Gastrocnemius medialis (tissue), 4 donors: ENCODE measurements at regions of chr18 and their contacts with region 1.

Region 1: DNA sequence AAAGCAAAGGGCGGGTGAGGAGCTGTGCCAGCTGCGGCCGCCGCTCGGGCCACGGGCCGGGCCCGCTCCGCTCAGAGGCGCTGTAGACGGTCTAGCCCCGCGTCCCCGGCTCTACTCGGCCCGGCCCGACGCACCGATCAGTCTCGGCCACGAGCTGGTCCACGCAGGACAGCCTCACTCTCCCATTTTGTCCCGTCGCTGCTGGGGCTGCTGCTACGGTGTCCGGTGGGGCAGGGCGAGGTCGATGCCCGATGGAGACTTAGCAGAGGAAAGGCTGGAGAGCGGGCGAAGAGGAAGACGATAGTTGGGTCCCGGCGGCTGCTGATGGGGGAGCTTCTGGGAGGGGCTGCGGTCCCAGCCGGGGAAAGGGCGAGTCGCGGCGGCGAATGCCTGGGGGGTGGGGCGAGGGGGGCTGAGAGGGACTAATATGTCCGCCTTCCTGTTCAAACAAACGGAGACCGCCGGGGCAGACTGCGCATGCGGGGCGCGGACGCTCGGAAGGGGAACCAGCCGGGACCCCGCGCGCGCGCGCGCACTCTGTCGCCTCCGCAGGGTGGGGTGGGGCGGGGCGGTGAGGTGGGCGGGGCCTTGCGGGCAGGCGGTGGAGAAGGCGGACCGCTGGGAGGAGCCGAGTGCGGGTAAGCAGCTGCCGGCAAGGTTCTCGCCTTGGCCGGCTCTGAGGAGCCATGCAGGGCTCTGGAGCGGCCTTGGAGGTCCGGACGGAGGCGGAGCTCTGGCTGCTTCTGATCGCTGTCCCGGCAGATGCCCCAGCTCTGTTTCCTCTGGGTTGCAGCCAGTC is at the start of gene ROCK1:
- DNase-seq: peak; percentile 96 to 98
- ATAC-seq: peak; percentile 89 to 91
- H3K4me3 ChIP-seq: peak within 1 kb of the TSS; percentile 81 to 100 (median 98)
- H3K27ac ChIP-seq: peak within 1 kb of the TSS; percentile 96 to 100 (median 99)
- H3K4me1 ChIP-seq: peaks cover 36 to 43% of the 10 kb centered on the region in 2 donors
- H3K27me3 ChIP-seq: no peaks in the 10 kb centered on the region
- CTCF ChIP-seq: no peak
- POLR2A ChIP-seq: peak; percentile 67 to 82
- total RNA-seq, gene ROCK1: 11.0 to 15.7 (median 12.7) TPM

Region 2: GRCh38 chr18:21004726-21005125 is 106.8 kb before region 1 on chr18:
- in situ Hi-C with region 1: loop called in 1 of 4 experiments (anchors 10 kb)
- intact Hi-C with region 1: loop called (anchors 5 kb)
- DNase-seq: peak in 1 of 2 donors; percentile 3
- ATAC-seq: peak; percentile 98 to 99
- H3K4me3 ChIP-seq: no peak overlapping the region
- H3K27ac ChIP-seq: peak overlapping the region; percentile 69 to 73 (median 70)
- H3K4me1 ChIP-seq: peaks cover 14 to 17% of the 10 kb centered on the region in 2 donors
- H3K27me3 ChIP-seq: no peaks in the 10 kb centered on the region
- CTCF ChIP-seq: no peak
- POLR2A ChIP-seq: no peak

Region 3: DNA sequence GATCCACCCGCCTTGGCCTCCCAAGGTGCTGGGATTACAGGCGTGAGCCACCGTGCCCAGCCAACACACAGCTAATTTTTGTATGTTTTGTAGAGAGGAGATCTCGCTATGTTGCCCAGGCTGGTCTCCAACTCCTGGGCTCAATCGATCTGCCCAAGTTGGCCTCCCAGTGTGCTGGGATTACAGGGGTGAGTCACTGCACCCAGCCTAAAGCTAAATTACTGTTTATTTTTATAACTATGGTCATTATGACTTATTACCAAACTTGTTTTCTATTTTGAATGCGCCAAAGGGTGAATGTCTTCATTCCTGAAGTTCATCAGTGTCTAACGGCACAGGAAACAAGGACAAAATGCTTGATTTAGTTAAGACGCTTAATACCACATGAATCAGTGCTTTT is 91.6 kb after region 1 on chr18:
- in situ Hi-C with region 1: no loop called
- intact Hi-C with region 1: no loop called
- DNase-seq: no peak
- ATAC-seq: no peak
- H3K4me3 ChIP-seq: no peak overlapping the region
- H3K27ac ChIP-seq: no peak overlapping the region
- H3K4me1 ChIP-seq: no peaks in the 10 kb centered on the region
- H3K27me3 ChIP-seq: no peaks in the 10 kb centered on the region
- CTCF ChIP-seq: no peak
- POLR2A ChIP-seq: no peak

Region 4: DNA sequence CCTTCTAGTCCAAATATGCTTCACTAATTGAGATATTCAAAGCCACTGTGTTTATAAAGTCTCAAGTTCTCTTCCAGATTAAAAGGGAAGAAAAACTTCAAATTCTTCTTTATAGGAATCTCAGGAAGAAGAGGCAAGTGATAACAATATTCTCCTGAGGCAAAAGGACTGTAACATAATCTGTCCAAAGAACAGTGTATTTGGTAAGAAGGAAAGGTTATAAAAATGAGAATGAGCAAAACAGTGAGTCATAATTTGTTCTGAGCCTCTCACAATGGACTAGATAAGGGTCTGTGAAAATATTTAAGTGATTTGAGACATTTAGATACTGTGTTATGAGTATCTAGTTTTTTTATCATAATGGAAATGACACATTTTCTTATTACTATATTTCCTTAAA is 544.9 kb after region 1 on chr18:
- in situ Hi-C with region 1: no loop called
- intact Hi-C with region 1: no loop called
- DNase-seq: no peak
- ATAC-seq: no peak
- H3K4me3 ChIP-seq: no peak overlapping the region
- H3K27ac ChIP-seq: no peak overlapping the region
- H3K4me1 ChIP-seq: no peaks in the 10 kb centered on the region
- H3K27me3 ChIP-seq: no peaks in the 10 kb centered on the region
- CTCF ChIP-seq: no peak
- POLR2A ChIP-seq: no peak

Region 5: DNA sequence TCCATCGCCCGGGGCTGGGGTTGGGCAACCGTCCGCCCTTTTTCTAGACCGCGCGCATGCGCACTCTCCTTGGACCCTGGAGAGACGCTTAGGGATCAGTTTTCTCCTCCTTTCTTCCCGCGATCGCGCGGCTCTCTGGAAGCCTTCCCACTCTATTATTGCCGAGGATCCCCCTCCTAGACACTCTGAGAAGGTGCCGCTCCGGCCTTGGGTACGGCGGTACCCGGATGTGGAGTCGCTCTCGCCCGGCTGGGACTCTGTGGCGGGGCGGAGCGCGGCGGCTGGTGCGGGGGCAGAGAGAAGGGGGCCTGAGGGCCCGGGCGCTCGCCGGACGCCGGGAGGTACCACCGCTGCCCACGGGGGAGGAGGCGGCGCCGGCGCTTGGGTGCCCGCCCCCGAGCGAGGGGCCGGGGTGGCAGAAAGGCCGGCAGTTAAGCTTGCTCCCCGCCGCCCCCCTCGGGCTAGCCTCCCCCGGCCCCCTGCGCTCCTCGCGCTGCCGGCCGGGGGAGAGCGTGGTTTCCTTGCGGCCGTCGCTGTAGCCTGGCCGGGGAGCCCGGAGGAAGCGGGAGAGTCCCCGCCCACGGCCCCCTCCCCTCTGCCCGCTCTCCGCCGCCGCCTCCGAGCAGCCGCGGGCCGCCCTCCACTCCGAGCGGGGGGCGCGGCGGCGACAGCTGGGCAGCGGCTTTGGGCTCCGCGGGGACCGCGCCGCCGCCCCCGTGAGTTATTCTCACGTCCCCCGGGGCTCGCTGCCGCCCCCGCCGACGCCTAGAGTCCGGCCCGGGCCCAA is 629.4 kb after region 1 on chr18 and contains the start of gene MIB1:
- in situ Hi-C with region 1: no loop called
- intact Hi-C with region 1: loop called (anchors 2 kb)
- DNase-seq: no peak
- ATAC-seq: peak; percentile 91 to 94
- H3K4me3 ChIP-seq: peak within 1 kb of the TSS; percentile 65 to 97 (median 81)
- H3K27ac ChIP-seq: peak within 1 kb of the TSS; percentile 92 to 99 (median 96)
- H3K4me1 ChIP-seq: peaks cover 30 to 37% of the 10 kb centered on the region in 2 donors
- H3K27me3 ChIP-seq: no peaks in the 10 kb centered on the region
- CTCF ChIP-seq: peak in 1 of 5 experiments; percentile 2
- POLR2A ChIP-seq: peak; percentile 84 to 88
- total RNA-seq, gene MIB1: 16.4 to 22.3 (median 21.6) TPM

Region 6: GRCh38 chr18:21831413-21831831 is 719.9 kb after region 1 on chr18:
- in situ Hi-C with region 1: no loop called
- intact Hi-C with region 1: loop called (anchors 10 kb)
- DNase-seq: peak; percentile 22 to 56
- ATAC-seq: peak; percentile 43 to 62
- H3K4me3 ChIP-seq: peak overlapping the region; percentile 40 to 61 (median 48)
- H3K27ac ChIP-seq: peak overlapping the region; percentile 80 to 89 (median 88)
- H3K4me1 ChIP-seq: peaks cover 36 to 44% of the 10 kb centered on the region in 2 donors
- H3K27me3 ChIP-seq: no peaks in the 10 kb centered on the region
- CTCF ChIP-seq: no peak
- POLR2A ChIP-seq: peak in 1 of 2 donors; percentile 43